Activated naive CD4-positive, alpha-beta T cell treated with anti-CD3 and anti-CD28 coated beads for 36 hours (primary cell): ENCODE measurements at regions of chr4 and their contacts with region 1.

Region 1: GRCh38 chr4:108683479-108683878 is 33.1 kb downstream of the OSTC start:
- DNase-seq: no peak
- H3K4me3 Mint-ChIP-seq: no peak overlapping the region
- H3K27ac Mint-ChIP-seq: no peak overlapping the region
- H3K4me1 Mint-ChIP-seq: no peaks in the 10 kb centered on the region
- H3K27me3 Mint-ChIP-seq: no peaks in the 10 kb centered on the region

Region 2: DNA sequence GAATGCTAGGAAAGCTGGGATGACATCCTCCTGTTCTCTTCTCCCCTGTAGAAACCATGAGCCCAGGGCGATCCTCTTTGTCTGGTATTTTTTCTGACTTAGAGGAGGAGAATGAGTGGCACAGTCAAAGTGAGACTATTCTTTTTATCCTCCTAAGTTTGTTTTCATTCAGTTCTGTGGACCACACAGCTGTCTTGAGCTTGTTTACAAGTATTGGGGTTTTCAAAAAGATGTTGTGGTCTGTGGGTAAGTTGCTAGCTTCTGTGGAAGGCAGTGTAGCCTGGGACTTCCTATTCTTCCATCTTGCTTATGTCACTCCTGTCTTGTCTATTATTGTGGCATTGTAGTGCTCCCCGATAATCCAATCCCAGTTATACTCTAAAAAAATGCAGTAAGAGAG is 1186.4 kb before region 1 on chr4:
- CTCF ChIA-PET with region 1: no interaction called
- intact Hi-C with region 1: no loop called
- DNase-seq: no peak
- H3K4me3 Mint-ChIP-seq: no peak overlapping the region
- H3K27ac Mint-ChIP-seq: no peak overlapping the region
- H3K4me1 Mint-ChIP-seq: no peaks in the 10 kb centered on the region
- H3K27me3 Mint-ChIP-seq: no peaks in the 10 kb centered on the region

Region 3: DNA sequence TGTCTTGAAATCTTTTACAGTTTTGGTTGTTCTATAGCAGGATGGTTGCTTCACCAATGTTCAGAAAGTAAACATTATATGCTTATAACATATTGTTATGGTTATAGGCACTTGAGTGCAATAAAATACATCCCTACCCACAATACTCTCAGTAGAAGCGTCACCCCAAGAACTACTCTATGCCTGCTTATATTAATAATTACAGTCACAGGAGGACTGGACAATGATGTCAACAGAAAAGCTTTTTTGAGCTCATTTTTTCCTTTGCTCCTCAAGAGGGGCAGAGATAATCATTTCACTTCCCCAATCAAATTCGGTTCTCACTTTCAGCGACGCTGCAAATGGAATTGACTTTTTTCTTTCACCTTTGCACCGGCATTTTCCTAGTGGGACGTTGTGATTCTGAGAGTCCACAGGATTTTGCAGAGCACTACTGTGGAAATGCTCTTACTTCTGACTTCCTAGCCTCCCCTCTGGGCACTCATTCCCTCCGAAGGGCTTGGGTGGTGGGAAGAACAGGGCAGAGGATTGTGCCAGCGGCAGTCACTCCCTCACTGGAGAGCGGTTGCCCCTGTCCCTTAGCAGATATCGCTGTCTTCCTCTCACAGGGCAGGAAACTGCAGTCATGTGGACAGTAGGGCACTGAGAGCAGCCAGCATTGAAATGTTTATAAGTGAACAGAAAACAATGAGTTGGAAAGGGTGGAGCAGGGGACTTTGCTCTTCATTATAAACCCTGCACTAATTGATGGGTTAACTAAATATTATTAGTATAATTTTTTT is 883.6 kb before region 1 on chr4:
- CTCF ChIA-PET with region 1: no interaction called
- intact Hi-C with region 1: no loop called
- DNase-seq: no peak
- H3K4me3 Mint-ChIP-seq: no peak overlapping the region
- H3K27ac Mint-ChIP-seq: no peak overlapping the region
- H3K4me1 Mint-ChIP-seq: no peaks in the 10 kb centered on the region
- H3K27me3 Mint-ChIP-seq: peaks cover 33% of the 10 kb centered on the region

Region 4: GRCh38 chr4:108783665-108784463 is 100.4 kb after region 1 on chr4:
- CTCF ChIA-PET with region 1: interaction called, 3 read pairs
- intact Hi-C with region 1: loop called (anchors 2 kb)
- DNase-seq: no peak
- H3K4me3 Mint-ChIP-seq: no peak overlapping the region
- H3K27ac Mint-ChIP-seq: no peak overlapping the region
- H3K4me1 Mint-ChIP-seq: no peaks in the 10 kb centered on the region
- H3K27me3 Mint-ChIP-seq: peaks cover 6% of the 10 kb centered on the region

Region 5: DNA sequence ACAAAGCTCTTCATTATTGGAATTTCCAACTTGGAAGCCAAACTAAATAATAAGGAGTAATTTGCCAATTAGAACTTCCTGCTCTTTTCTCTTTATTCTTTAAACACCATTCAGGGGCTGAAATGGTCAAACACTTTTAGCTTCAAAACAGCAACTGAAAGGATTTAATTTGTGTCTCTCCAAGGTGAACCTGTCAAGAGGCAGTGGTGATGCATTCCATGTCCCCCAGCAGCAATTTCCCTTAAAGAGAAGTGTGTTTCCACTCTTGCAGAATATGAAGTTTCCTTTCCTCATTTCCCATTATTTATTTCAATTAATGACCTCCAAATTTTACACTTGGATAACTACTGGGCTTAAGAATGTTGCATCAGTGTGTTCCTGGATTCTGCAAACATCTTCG is 463.0 kb after region 1 on chr4:
- CTCF ChIA-PET with region 1: no interaction called
- intact Hi-C with region 1: no loop called
- DNase-seq: no peak
- H3K4me3 Mint-ChIP-seq: no peak overlapping the region
- H3K27ac Mint-ChIP-seq: no peak overlapping the region
- H3K4me1 Mint-ChIP-seq: no peaks in the 10 kb centered on the region
- H3K27me3 Mint-ChIP-seq: peaks cover 5% of the 10 kb centered on the region

Region 6: DNA sequence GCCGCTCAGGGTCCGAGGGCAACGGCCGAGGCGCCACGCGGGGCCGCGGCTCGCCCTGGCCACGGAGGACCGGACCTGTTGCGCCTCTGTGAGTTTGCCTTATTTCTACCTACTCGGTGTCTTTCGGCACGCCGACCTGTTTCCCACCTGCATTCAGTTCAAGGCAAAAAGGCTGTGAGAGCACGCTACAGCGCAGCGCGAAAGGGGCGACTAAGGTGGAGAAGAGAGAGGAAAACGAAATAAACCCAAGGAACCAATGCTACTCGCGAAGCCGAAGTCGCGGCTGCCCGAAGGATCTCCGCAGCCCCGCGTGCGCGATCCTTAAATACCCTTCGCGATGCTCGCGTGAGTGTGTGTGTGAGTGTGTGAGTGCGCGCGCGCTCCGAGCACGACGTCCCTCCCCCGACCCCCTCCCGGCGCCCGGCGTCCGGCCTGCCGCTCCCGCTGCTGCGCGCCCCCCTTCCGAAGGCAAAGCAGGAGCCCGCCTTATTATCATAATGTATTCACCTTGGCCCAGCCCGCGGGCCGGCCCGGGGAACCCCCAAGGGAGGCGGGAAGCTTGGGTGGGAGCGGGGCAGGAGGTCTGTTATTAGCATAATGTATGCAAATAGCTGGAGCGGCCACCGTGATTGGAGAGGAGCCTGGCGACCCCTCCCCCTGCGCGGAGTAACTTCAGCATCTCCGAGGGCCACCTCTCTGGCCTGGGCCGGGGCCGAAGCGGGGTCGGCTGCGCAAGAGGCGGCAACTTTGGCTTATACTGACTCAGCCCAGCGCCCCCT is 619.1 kb after region 1 on chr4 and contains the start of gene COL25A1:
- CTCF ChIA-PET with region 1: no interaction called
- intact Hi-C with region 1: loop called (anchors 2 kb)
- DNase-seq: peak; percentile 63
- H3K4me3 Mint-ChIP-seq: peak within 1 kb of the TSS; percentile 74
- H3K27ac Mint-ChIP-seq: no peak within 1 kb of the TSS
- H3K4me1 Mint-ChIP-seq: peaks cover 12% of the 10 kb centered on the region
- H3K27me3 Mint-ChIP-seq: peaks cover 46% of the 10 kb centered on the region
- total RNA-seq, gene COL25A1: not detected

Region 7: DNA sequence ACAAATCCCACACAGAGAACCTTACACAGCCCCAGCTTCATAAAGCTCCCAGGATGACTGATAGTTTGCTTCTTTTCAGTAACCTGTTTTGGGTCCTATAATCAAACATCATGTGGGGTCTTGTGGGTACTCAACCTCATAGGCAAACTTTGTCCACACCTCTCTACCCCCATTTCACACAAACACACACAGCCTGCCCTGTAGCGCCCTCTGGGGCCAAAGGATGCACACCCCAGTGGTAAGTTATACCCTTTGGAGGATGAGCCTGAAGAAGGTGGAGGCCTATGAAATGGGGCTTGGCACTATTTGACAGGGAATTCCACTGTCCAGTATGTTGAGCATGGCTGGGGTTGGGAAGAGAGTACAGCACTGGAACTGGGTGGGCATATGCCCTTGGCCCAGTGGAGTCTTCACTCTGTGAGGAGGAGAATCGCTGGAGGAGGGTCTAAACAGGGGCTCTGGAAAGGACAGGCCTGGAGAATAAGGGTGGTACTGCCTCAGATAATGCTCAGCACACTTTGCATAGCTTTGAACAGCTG is 649.5 kb after region 1 on chr4:
- CTCF ChIA-PET with region 1: no interaction called
- intact Hi-C with region 1: loop called (anchors 1 kb)
- DNase-seq: peak; percentile 55
- H3K4me3 Mint-ChIP-seq: no peak overlapping the region
- H3K27ac Mint-ChIP-seq: no peak overlapping the region
- H3K4me1 Mint-ChIP-seq: no peaks in the 10 kb centered on the region
- H3K27me3 Mint-ChIP-seq: no peaks in the 10 kb centered on the region

Region 8: GRCh38 chr4:109406338-109406931 is 723.0 kb after region 1 on chr4:
- CTCF ChIA-PET with region 1: no interaction called
- intact Hi-C with region 1: loop called (anchors 2 kb)
- DNase-seq: peak; percentile 52
- H3K4me3 Mint-ChIP-seq: no peak overlapping the region
- H3K27ac Mint-ChIP-seq: no peak overlapping the region
- H3K4me1 Mint-ChIP-seq: no peaks in the 10 kb centered on the region
- H3K27me3 Mint-ChIP-seq: no peaks in the 10 kb centered on the region